B cell (primary cell): ENCODE measurements at regions of chr20 and their contacts with region 1.

Region 1: GRCh38 chr20:46117704-46118467 is at the start of gene CD40:
- DNase-seq: peak; percentile 94
- ATAC-seq: peak; percentile 77
- H3K4me3 ChIP-seq: peak within 1 kb of the TSS; percentile 65 to 93 (median 83)
- H3K4me3 Mint-ChIP-seq: peak within 1 kb of the TSS; percentile 100
- H3K27ac ChIP-seq: peak within 1 kb of the TSS; percentile 99 to 100
- H3K27ac Mint-ChIP-seq: peak within 1 kb of the TSS; percentile 100
- H3K4me1 ChIP-seq: peaks cover 35 to 49% of the 10 kb centered on the region in 2 donors
- H3K4me1 Mint-ChIP-seq: peaks cover 54% of the 10 kb centered on the region
- H3K27me3 ChIP-seq: no peaks in the 10 kb centered on the region
- H3K27me3 Mint-ChIP-seq: no peaks in the 10 kb centered on the region
- CTCF ChIP-seq: no peak
- total RNA-seq, gene CD40: 206 and 210 TPM in 2 replicates

Region 2: GRCh38 chr20:44979090-44979621 is 1138.7 kb before region 1 on chr20:
- CTCF ChIA-PET with region 1: no interaction called
- POLR2A ChIA-PET with region 1: no interaction called
- intact Hi-C with region 1: loop called (anchors 2 kb)
- DNase-seq: peak; percentile 93
- ATAC-seq: peak; percentile 91
- H3K4me3 ChIP-seq: peak overlapping the region; percentile 4 to 54 (median 32)
- H3K4me3 Mint-ChIP-seq: peak overlapping the region; percentile 68
- H3K27ac ChIP-seq: peak overlapping the region; percentile 97 to 98
- H3K27ac Mint-ChIP-seq: peak overlapping the region; percentile 95
- H3K4me1 ChIP-seq: peaks cover 34 to 43% of the 10 kb centered on the region in 2 donors
- H3K4me1 Mint-ChIP-seq: peaks cover 65% of the 10 kb centered on the region
- H3K27me3 ChIP-seq: no peaks in the 10 kb centered on the region
- H3K27me3 Mint-ChIP-seq: no peaks in the 10 kb centered on the region
- CTCF ChIP-seq: no peak

Region 3: DNA sequence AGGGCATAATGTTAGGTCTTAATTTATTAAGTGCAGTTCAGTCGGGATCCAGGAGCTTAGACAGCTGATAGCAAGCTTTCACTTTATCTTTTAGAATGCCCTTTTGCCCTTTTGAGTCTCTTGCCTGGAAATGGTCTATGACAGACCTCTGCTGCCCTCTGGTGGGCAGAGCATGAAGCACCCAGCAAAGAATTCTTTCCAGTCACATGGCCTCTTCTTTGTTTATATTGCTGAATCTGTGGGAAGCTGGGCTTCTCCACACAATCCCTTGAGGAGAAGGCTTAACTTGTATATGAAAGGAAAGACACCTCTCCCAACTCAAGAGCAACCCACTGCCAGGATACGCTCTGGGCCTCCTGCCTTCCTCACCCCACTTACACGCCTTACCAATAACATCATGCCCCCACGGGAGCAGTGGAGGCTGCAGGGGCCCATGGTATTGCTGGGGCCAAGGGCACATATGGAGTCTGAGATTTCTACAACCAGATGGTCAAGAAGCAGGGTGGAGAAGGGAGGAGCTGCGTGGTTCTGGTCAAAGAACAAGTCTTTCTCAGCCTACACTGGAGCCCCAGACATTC is 346.6 kb before region 1 on chr20:
- CTCF ChIA-PET with region 1: no interaction called
- POLR2A ChIA-PET with region 1: no interaction called
- intact Hi-C with region 1: no loop called
- DNase-seq: peak; percentile 86
- ATAC-seq: peak; percentile 73
- H3K4me3 ChIP-seq: no peak overlapping the region
- H3K4me3 Mint-ChIP-seq: no peak overlapping the region
- H3K27ac ChIP-seq: no peak overlapping the region
- H3K27ac Mint-ChIP-seq: no peak overlapping the region
- H3K4me1 ChIP-seq: peaks cover 0 to 6% of the 10 kb centered on the region in 2 donors
- H3K4me1 Mint-ChIP-seq: peaks cover 5% of the 10 kb centered on the region
- H3K27me3 ChIP-seq: peaks cover 0 to 6% (median 1%) of the 10 kb centered on the region in 4 experiments
- H3K27me3 Mint-ChIP-seq: peaks cover 18% of the 10 kb centered on the region
- CTCF ChIP-seq: peak; percentile 95

Region 4: GRCh38 chr20:46013826-46014516 is 103.9 kb before region 1 on chr20:
- CTCF ChIA-PET with region 1: interaction called, 14 read pairs
- POLR2A ChIA-PET with region 1: interaction called, 3 read pairs
- intact Hi-C with region 1: no loop called
- DNase-seq: peak; percentile 87
- ATAC-seq: peak; percentile 88
- H3K4me3 ChIP-seq: peak overlapping the region in 4 of 5 experiments; percentile 19 to 47 (median 35)
- H3K4me3 Mint-ChIP-seq: peak overlapping the region; percentile 72
- H3K27ac ChIP-seq: no peak overlapping the region
- H3K27ac Mint-ChIP-seq: peak overlapping the region; percentile 63
- H3K4me1 ChIP-seq: peaks cover 48 to 49% of the 10 kb centered on the region in 2 donors
- H3K4me1 Mint-ChIP-seq: peaks cover 49% of the 10 kb centered on the region
- H3K27me3 ChIP-seq: peaks cover 0 to 57% (median 29%) of the 10 kb centered on the region in 4 experiments
- H3K27me3 Mint-ChIP-seq: peaks cover 59% of the 10 kb centered on the region
- CTCF ChIP-seq: peak; percentile 89

Region 5: DNA sequence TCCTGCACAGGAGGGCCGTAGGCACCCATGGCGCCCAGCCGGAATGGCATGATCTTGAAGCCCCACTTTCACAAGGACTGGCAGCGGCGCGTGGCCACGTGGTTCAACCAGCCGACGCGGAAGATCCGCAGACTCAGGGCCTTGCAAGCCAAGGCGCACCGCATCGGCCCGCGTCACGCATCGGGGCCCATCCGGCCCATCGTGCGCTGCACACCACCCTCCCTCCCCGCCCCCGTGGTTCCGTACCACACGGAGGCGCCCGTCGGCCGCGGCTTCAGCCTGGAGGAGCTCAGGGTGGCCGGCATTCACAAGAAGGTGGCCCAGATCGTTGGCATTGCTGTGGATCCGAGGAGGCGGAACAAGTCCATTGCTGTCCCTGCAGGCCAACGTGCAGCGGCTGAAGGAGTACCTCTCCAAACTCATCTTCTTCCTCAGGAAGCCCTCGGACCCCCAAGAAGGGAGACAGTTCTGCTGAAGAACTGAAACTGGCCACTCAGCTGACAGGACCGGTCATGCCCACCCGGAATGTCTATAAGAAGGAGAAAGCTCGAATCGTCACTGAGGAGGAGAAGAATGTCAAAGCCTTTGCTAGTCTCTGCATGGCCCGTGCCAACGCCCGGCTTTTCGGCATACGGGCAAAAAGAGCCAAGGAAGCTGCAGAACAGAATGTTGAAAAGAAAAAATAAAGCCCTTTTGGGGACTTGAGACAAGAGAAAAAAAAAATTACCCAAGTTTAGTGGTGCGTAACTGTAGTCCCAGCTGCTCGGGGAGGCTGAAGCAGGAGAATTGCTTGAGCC is 18.2 kb before region 1 on chr20:
- CTCF ChIA-PET with region 1: interaction called, 29 read pairs
- POLR2A ChIA-PET with region 1: no interaction called
- intact Hi-C with region 1: loop called (anchors 1 kb)
- DNase-seq: peak; percentile 86
- ATAC-seq: peak; percentile 99
- H3K4me3 ChIP-seq: peak overlapping the region in 4 of 5 experiments; percentile 14 to 49 (median 32)
- H3K4me3 Mint-ChIP-seq: peak overlapping the region; percentile 79
- H3K27ac ChIP-seq: no peak overlapping the region
- H3K27ac Mint-ChIP-seq: peak overlapping the region; percentile 56
- H3K4me1 ChIP-seq: peaks cover 8 to 12% of the 10 kb centered on the region in 2 donors
- H3K4me1 Mint-ChIP-seq: peaks cover 15% of the 10 kb centered on the region
- H3K27me3 ChIP-seq: no peaks in the 10 kb centered on the region
- H3K27me3 Mint-ChIP-seq: peaks cover 4% of the 10 kb centered on the region
- CTCF ChIP-seq: peak; percentile 45

Region 6: GRCh38 chr20:46363800-46364634 is 246.1 kb after region 1 on chr20:
- CTCF ChIA-PET with region 1: no interaction called
- POLR2A ChIA-PET with region 1: no interaction called
- intact Hi-C with region 1: loop called (anchors 5 kb)
- DNase-seq: peak; percentile 91
- ATAC-seq: peak; percentile 84
- H3K4me3 ChIP-seq: peak overlapping the region; percentile 64 to 97 (median 95)
- H3K4me3 Mint-ChIP-seq: peak overlapping the region; percentile 91
- H3K27ac ChIP-seq: peak overlapping the region; percentile 98 to 100
- H3K27ac Mint-ChIP-seq: peak overlapping the region; percentile 83
- H3K4me1 ChIP-seq: peaks cover 38 to 48% of the 10 kb centered on the region in 2 donors
- H3K4me1 Mint-ChIP-seq: peaks cover 48% of the 10 kb centered on the region
- H3K27me3 ChIP-seq: no peaks in the 10 kb centered on the region
- H3K27me3 Mint-ChIP-seq: no peaks in the 10 kb centered on the region
- CTCF ChIP-seq: no peak